Sciatic nerve (tissue), 2 donors: ENCODE measurements at regions of chr1 and their contacts with region 1.

Region 1: GRCh38 chr1:45299981-45300668 is 26.6 kb upstream of the HPDL start:
- DNase-seq: no peak
- ATAC-seq: no peak

Region 2: DNA sequence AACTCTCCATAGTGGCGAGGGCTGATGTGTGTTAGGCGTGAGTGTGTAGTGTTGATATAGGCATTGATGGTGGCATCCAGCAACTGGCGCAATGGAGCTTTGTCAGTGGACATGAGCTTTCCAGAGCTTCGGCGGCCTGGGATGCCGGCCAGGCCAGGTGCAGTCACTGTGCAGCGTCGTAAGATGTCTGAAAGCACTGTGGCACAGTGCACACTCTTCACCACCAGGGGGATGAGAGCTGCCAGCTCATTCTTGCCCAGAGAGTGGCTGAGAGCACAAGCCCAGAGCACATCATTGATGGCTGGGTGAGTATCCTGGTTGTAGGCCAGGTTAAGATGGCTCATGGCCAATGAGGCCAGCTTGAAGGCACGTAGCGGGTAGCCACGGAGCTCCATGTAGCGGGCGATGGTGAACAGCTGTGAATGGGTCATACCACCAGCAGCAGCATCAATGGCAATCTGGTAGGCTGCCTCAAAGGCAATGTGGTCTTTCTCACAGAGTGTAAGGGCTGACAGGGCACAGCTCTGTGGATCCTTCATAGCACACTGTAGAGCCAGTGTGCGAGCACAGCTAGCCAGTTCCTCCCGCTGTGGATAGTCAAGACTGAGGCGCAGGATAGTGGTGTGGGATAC is 281.4 kb before region 1 on chr1:
- intact Hi-C with region 1: loop called (anchors 2 kb)
- DNase-seq: no peak
- ATAC-seq: no peak

Region 3: GRCh38 chr1:45033356-45033755 is 266.8 kb before region 1 on chr1:
- intact Hi-C with region 1: no loop called
- DNase-seq: no peak
- ATAC-seq: no peak

Region 4: GRCh38 chr1:45246760-45247159 is 53.4 kb before region 1 on chr1:
- intact Hi-C with region 1: no loop called
- DNase-seq: no peak
- ATAC-seq: no peak

Region 5: DNA sequence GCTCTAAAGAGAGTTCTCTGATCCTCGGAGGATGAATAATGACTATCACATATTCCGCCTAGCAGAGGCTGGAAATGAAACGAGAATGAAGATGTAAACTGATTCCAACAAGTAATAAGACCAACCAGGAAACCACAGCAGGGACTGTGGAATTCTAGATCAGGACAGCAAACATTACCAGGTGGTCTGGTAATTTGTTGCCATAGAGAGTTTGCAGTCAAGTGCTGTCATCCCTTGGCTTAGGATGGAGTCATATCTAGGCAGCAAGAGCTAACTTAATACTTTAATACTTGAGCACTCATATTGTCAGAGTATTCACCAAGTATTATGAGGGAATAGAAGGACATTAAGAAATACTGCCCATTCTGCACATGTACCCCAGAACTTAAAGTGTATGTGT is 85.2 kb after region 1 on chr1:
- intact Hi-C with region 1: no loop called
- DNase-seq: no peak
- ATAC-seq: no peak